ENCODE measurements at regions of chr14 and their contacts with region 1.

Region 1: GRCh38 chr14:55609681-55610080 is 29.7 kb downstream of the KTN1 start:
- DNase-seq: no peak
- ATAC-seq: no peak
- H3K4me3 ChIP-seq: no peak overlapping the region
- H3K27ac ChIP-seq: peak overlapping the region in 3 of 4 donors; percentile 13 to 80 (median 13)
- H3K4me1 ChIP-seq: peaks cover 91 to 96% of the 10 kb centered on the region in 2 donors
- H3K27me3 ChIP-seq: no peaks in the 10 kb centered on the region
- CTCF ChIP-seq: no peak
- POLR2A ChIP-seq: no peak

Region 2: GRCh38 chr14:55129428-55130195 is 480.1 kb before region 1 on chr14:
- in situ Hi-C with region 1: no loop called
- intact Hi-C with region 1: no loop called
- DNase-seq: peak; percentile 33 to 44
- ATAC-seq: peak; percentile 56 to 59
- H3K4me3 ChIP-seq: peak overlapping the region; percentile 62 to 75 (median 69)
- H3K27ac ChIP-seq: peak overlapping the region; percentile 81 to 88 (median 86)
- H3K4me1 ChIP-seq: peaks cover 2 to 12% of the 10 kb centered on the region in 2 donors
- H3K27me3 ChIP-seq: peaks cover 0 to 6% (median 0%) of the 10 kb centered on the region in 3 donors
- CTCF ChIP-seq: no peak
- POLR2A ChIP-seq: no peak

Region 3: DNA sequence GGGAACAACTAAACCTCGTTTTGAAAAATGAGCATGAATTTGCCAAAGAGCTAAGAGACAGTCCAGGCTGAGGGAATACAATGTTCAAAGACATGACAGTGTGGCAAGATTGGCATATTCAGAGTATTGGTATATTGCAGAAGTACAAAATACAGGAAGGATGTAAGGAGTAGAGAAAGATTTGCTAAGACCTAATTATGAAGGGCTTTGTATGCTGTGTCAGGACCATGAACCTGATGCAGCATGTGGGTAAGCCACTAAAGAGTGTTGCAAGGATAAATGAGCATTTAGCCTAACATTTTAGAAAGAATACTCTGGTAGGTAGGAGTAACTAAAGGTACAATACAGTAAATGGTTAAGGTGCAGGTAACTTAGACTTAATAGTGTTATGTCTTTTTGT is 35.5 kb after region 1 on chr14:
- in situ Hi-C with region 1: no loop called
- intact Hi-C with region 1: loop called (anchors 2 kb)
- DNase-seq: no peak
- ATAC-seq: peak; percentile 42 to 49
- H3K4me3 ChIP-seq: no peak overlapping the region
- H3K27ac ChIP-seq: peak overlapping the region; percentile 67 to 75 (median 73)
- H3K4me1 ChIP-seq: peaks cover 36 to 37% of the 10 kb centered on the region in 2 donors
- H3K27me3 ChIP-seq: no peaks in the 10 kb centered on the region
- CTCF ChIP-seq: no peak
- POLR2A ChIP-seq: no peak

Region 4: GRCh38 chr14:55662752-55663151 is 53.1 kb after region 1 on chr14:
- in situ Hi-C with region 1: no loop called
- intact Hi-C with region 1: loop called (anchors 5 kb)
- DNase-seq: no peak
- ATAC-seq: peak; percentile 59 to 74
- H3K4me3 ChIP-seq: no peak overlapping the region
- H3K27ac ChIP-seq: peak overlapping the region; percentile 83 to 89 (median 87)
- H3K4me1 ChIP-seq: peaks cover 43 to 50% of the 10 kb centered on the region in 2 donors
- H3K27me3 ChIP-seq: no peaks in the 10 kb centered on the region
- CTCF ChIP-seq: peak in 1 of 5 experiments; percentile 18
- POLR2A ChIP-seq: no peak

Measured in gastrocnemius medialis (tissue), 4 donors.